GM12878 (cell line): ENCODE measurements at regions of chr11 and their contacts with region 1.

Region 1: GRCh38 chr11:94563176-94563847 is 3.9 kb upstream of the PIWIL4 start:
- DNase-seq: no peak
- ATAC-seq: no peak
- H3K4me3 ChIP-seq: no peak overlapping the region
- H3K27ac ChIP-seq: no peak overlapping the region
- H3K4me1 ChIP-seq: no peaks in the 10 kb centered on the region
- H3K27me3 ChIP-seq: no peaks in the 10 kb centered on the region
- CTCF ChIP-seq: no peak
- EP300 ChIP-seq: no peak
- POLR2A ChIP-seq: no peak
- RAD21 ChIP-seq: no peak

Region 2: DNA sequence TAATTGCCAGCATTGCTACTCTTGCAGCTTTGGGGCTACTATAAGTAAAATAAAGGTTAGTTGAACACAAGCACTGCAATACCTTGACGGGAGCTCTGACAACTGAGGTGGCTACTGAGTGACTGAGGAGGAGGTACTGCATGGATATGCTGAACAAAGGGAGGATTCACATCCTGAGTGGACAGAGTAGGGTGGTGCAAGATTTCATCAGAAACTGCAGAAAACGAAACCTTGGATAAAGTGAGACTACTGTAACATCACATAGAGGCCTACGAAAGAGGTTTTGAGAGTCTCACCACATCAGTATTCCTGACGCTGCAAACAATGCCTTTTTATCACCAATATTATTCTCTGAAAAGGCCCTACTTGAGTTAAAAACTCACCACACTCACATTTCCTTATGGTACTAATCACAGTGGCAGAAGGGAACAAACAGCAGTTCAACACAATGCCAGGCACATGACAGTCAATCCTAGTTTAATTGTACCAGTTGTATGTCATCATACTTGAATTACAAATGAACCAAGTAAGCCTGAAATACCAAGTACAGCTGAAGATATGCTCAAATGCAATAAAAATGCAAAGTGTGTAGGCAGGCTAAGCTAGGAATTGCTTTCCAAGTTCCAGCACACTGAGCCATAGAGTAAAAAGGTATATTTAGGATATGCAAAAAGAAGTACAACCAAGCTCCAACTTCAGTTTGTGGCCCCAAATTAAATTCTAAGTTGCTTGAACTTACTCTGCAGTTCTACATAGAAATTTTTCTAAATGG is 158.1 kb before region 1 on chr11:
- CTCF ChIA-PET with region 1: no interaction called
- POLR2A ChIA-PET with region 1: no interaction called
- RAD21 ChIA-PET with region 1: no interaction called
- SMC1A ChIA-PET with region 1: no interaction called
- in situ Hi-C with region 1: no loop called
- intact Hi-C with region 1: no loop called
- DNase-seq: no peak
- ATAC-seq: no peak
- H3K4me3 ChIP-seq: no peak overlapping the region
- H3K27ac ChIP-seq: no peak overlapping the region
- H3K4me1 ChIP-seq: no peaks in the 10 kb centered on the region
- H3K27me3 ChIP-seq: peaks cover 0 to 8% of the 10 kb centered on the region in 2 experiments; a peak in 3 of 4 replicates
- CTCF ChIP-seq: no peak
- EP300 ChIP-seq: no peak
- POLR2A ChIP-seq: no peak
- RAD21 ChIP-seq: no peak

Region 3: GRCh38 chr11:94574193-94574961 is 11.1 kb after region 1 on chr11:
- CTCF ChIA-PET with region 1: interaction called, 18 read pairs
- POLR2A ChIA-PET with region 1: interaction called, 7 read pairs
- RAD21 ChIA-PET with region 1: no interaction called
- SMC1A ChIA-PET with region 1: interaction called, 11 read pairs
- in situ Hi-C with region 1: no loop called
- intact Hi-C with region 1: no loop called
- DNase-seq: no peak
- ATAC-seq: no peak
- H3K4me3 ChIP-seq: no peak overlapping the region
- H3K27ac ChIP-seq: no peak overlapping the region
- H3K4me1 ChIP-seq: no peaks in the 10 kb centered on the region
- H3K27me3 ChIP-seq: no peaks in the 10 kb centered on the region
- CTCF ChIP-seq: no peak
- EP300 ChIP-seq: no peak
- POLR2A ChIP-seq: no peak
- RAD21 ChIP-seq: no peak